ENCODE measurements at regions of chr12 and their contacts with region 1.

Region 1: GRCh38 chr12:103930034-103930786 is at the start of gene HSP90B1:
- DNase-seq: peak; percentile 100
- H3K4me3 Mint-ChIP-seq: peak within 1 kb of the TSS; percentile 83
- H3K27ac Mint-ChIP-seq: peak within 1 kb of the TSS; percentile 100
- H3K4me1 Mint-ChIP-seq: peaks cover 61% of the 10 kb centered on the region
- H3K27me3 Mint-ChIP-seq: no peaks in the 10 kb centered on the region
- total RNA-seq, gene HSP90B1: 375 to 378 TPM

Region 2: GRCh38 chr12:103751171-103751570 is 179.0 kb before region 1 on chr12:
- CTCF ChIA-PET with region 1: no interaction called
- POLR2A ChIA-PET with region 1: no interaction called
- DNase-seq: no peak
- H3K4me3 Mint-ChIP-seq: no peak overlapping the region
- H3K27ac Mint-ChIP-seq: no peak overlapping the region
- H3K4me1 Mint-ChIP-seq: no peaks in the 10 kb centered on the region
- H3K27me3 Mint-ChIP-seq: no peaks in the 10 kb centered on the region

Region 3: GRCh38 chr12:103840876-103841689 is 89.1 kb before region 1 on chr12 and contains the start of gene NT5DC3:
- CTCF ChIA-PET with region 1: no interaction called
- POLR2A ChIA-PET with region 1: interaction called, 16 read pairs
- DNase-seq: peak; percentile 85
- H3K4me3 Mint-ChIP-seq: peak within 1 kb of the TSS; percentile 78
- H3K27ac Mint-ChIP-seq: no peak within 1 kb of the TSS
- H3K4me1 Mint-ChIP-seq: peaks cover 18% of the 10 kb centered on the region
- H3K27me3 Mint-ChIP-seq: peaks cover 22% of the 10 kb centered on the region
- total RNA-seq, gene NT5DC3: 3.2 to 3.4 TPM

Region 4: DNA sequence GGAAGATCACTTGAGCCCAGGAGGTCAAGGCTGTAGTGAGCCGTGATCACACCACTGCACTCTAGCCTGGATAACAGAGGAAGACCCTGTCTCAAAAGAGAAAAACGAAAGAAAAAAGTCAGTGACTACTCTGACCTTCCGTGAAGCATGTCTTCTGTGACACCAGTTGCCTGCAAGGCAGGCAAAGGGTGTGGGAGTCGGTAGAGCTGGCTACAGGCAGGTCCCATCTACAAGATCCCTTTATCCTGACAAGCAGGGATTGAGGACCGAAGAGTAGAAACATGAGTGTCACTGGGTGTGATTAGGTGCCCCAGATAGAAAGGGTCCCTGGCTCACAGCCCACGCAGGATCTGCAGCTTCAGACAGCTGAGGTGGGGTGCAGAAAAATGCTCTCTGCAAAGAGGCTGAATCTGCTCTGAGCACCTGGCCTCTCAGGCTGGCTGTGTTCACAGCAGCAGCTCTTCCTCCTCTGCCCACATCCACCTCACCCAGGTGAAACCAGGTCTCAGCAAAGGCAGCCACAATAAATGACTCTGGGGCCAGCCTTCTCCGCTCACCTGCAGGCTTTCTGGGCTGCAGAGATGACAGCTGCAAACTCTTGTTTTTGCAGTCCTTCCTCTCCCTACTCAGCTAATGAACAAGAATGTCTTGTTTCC is 28.6 kb before region 1 on chr12:
- CTCF ChIA-PET with region 1: no interaction called
- POLR2A ChIA-PET with region 1: interaction called, 18 read pairs
- DNase-seq: peak; percentile 26
- H3K4me3 Mint-ChIP-seq: no peak overlapping the region
- H3K27ac Mint-ChIP-seq: no peak overlapping the region
- H3K4me1 Mint-ChIP-seq: peaks cover 20% of the 10 kb centered on the region
- H3K27me3 Mint-ChIP-seq: no peaks in the 10 kb centered on the region

Region 5: DNA sequence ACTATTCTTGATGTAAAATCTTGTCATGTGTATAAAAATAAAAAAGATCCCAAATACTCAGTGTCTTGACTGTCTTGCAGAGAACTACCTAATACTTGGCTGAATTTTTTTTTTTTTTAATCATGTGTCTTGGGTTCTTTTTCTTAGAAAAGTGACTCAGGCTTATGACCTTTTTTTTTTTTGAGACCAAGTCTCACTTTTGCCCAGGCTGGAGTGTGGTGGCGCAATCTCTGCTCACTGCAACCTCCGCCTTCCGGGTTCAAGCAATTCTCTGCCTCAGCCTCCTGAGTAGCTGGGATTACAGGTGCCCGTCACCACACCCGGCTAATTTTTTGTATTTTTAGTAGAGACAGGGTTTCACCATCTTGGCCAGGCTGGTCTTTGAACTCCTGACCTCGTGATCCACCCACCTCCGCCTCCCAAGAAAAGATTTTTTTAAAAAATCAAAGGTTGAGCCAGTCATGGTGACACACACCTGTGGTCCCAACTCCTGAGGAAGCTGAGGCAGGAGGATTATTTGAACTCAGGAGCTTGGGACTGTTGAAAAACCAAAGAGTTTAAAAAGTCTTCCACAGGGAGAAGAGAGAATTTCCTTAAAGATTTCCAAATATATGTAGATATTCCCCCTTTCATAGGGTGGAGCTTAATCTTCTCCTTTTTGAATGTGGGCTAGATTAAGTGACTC is 17.8 kb after region 1 on chr12:
- CTCF ChIA-PET with region 1: interaction called, 4 read pairs
- POLR2A ChIA-PET with region 1: interaction called, 57 read pairs
- DNase-seq: no peak
- H3K4me3 Mint-ChIP-seq: no peak overlapping the region
- H3K27ac Mint-ChIP-seq: peak overlapping the region; percentile 49
- H3K4me1 Mint-ChIP-seq: peaks cover 52% of the 10 kb centered on the region
- H3K27me3 Mint-ChIP-seq: no peaks in the 10 kb centered on the region

Region 6: DNA sequence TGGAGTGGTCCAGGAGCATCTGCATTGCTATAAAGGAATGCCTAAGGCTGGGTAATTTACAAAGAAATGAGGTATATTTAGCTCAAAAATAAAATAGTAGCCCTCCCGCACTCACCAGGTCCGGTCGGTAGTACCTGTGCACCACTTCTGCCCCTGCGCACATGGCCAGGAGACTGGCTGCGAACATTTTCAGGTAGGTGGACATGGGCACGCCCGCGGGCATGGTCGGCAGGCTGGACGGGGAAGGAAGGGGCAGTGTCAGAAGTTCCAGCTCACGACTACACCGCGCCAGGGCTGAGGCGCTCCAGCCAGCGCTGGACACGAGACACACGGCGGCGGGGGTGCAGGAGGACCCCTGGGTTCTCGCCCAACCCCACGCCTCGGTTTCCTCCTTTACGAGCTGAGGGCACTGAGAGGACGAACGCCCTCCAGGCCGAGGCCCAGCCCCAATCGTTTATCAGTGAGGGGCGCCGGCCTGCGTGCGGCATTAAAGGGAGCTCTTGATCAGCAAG is 26.4 kb after region 1 on chr12:
- CTCF ChIA-PET with region 1: interaction called, 5 read pairs
- POLR2A ChIA-PET with region 1: interaction called, 128 read pairs
- DNase-seq: no peak
- H3K4me3 Mint-ChIP-seq: peak overlapping the region; percentile 96
- H3K27ac Mint-ChIP-seq: peak overlapping the region; percentile 95
- H3K4me1 Mint-ChIP-seq: peaks cover 44% of the 10 kb centered on the region
- H3K27me3 Mint-ChIP-seq: no peaks in the 10 kb centered on the region

Region 7: DNA sequence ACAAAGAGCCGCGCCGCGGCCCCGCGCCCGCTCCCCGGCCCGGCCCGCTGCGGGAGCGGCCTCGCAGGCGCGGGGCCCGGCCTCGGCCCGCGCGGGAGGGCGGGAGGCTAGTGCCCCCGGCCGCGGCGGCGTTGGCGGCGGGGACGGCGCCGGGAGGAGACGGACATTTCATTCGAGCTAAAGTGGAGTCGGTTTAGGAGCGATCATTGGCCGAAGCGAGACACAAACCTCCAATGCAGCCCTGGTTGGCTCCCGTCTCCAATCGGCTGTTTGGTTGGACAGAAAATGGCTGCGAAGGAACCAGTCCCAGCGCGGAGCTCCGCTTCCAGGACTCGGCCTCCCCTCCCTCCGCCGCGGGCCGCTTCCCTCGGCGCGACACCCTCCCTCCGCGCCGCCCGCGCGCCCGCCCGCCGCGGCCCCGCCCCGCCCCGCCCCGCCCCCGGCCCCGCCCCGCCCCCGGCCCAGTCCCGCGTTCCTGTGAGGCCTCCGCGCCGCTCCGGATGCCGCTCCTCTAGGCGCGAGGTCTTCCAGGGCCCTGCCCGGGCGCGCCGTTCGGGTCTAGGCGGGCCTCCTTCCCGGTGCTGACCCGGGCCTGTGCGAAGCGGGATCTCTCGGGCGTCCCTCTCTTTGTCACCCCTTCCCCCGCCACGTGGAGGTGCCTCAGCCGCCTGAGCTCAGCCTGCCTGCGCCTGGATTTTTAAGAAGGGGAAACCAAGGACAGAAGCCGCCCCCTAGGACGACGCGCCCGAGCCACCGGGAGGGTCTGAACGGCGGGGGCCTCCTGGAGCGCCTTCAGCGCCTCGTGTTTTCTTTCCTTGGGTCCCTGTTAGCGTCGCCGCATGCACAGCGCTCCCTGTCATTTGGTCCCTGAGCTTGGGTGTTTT is 207.9 kb after region 1 on chr12 and contains the start of gene NFYB:
- CTCF ChIA-PET with region 1: no interaction called
- POLR2A ChIA-PET with region 1: interaction called, 16 read pairs
- DNase-seq: peak; percentile 94
- H3K4me3 Mint-ChIP-seq: peak within 1 kb of the TSS; percentile 88
- H3K27ac Mint-ChIP-seq: peak within 1 kb of the TSS; percentile 86
- H3K4me1 Mint-ChIP-seq: peaks cover 23% of the 10 kb centered on the region
- H3K27me3 Mint-ChIP-seq: peaks cover 18% of the 10 kb centered on the region
- total RNA-seq, gene NFYB: 22.3 to 22.7 TPM

Region 8: DNA sequence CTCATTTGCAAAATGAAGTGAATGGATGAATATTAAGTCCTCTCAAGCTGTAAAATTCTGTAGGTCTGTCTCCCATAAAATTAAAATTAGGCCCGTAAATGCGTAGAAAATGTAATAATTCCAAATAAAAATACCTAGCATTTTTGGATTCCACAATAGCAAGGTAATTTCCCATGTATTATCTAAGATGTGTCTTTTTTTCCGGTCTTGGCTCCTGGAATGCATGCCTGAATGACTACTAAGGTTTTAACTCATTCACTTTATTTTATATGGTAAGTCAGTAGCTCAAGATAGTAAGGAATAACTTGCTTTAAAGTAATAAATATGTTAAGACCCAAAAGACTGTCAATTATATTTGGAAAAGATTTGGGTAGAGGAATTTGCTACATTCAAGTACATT is 296.5 kb after region 1 on chr12:
- CTCF ChIA-PET with region 1: no interaction called
- POLR2A ChIA-PET with region 1: no interaction called
- DNase-seq: no peak
- H3K4me3 Mint-ChIP-seq: no peak overlapping the region
- H3K27ac Mint-ChIP-seq: no peak overlapping the region
- H3K4me1 Mint-ChIP-seq: peaks cover 7% of the 10 kb centered on the region
- H3K27me3 Mint-ChIP-seq: peaks cover 22% of the 10 kb centered on the region

Measured in activated CD4-positive, alpha-beta memory T cell treated with anti-CD3 and anti-CD28 coated beads, Interleukin-2, amount 10 ng/mL, durations not matched to agents 7 days and 5 days (primary cell).